T-cell (primary cell): ENCODE measurements at regions of chr3 and their contacts with region 1.

Region 1: DNA sequence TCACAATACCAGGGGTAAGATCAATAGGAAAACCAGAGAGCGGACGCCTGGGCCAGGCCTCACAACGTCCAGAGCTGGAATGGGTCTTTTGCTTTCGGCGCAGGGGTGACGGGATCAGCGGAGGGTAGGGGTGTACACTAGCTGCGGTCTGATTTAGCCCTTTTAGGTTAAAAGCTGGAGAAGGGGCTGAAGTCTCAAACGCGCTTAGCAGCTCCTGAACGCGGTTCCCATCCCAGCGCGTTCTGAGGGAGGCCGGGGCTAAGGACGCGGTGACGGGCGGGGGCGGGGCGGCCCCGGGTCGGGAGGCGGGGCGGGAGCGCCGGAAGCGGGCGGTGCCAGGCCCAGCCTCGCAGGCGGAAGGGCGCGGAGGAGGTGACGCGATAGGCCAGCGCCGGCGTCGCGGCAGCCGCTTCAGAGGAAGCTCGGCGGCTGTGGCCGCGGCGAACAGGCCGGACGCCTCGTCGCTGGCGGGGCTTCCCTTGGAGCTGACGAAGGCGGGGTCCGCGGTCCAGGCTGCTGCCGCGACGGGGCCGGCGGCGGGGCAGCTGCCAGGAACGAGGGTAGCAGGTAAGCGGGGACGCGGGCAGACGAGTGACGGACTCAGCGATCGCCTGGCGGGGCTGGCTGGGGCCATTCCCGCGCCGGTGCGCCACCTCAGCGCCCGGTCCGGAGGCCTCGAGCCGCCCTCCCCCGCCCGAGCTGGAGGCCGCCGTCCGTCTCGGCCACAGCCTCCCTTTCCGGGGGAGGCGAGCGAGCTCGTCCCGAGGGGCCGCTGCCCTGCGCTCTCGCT is at the start of gene SENP5:
- DNase-seq: peak; percentile 77 to 95 (median 87)
- ATAC-seq: peak; percentile 97 to 98 (median 98)
- H3K4me3 ChIP-seq: peak within 1 kb of the TSS; percentile 79 to 92
- H3K4me3 Mint-ChIP-seq: peak within 1 kb of the TSS; percentile 94 to 97 (median 94)
- H3K27ac ChIP-seq: peak within 1 kb of the TSS; percentile 89
- H3K27ac Mint-ChIP-seq: peak within 1 kb of the TSS; percentile 94 to 95
- H3K4me1 ChIP-seq: peaks cover 12 to 26% of the 10 kb centered on the region in 2 experiments
- H3K4me1 Mint-ChIP-seq: peaks cover 28 to 34% (median 33%) of the 10 kb centered on the region in 3 donors
- H3K27me3 ChIP-seq: no peaks in the 10 kb centered on the region
- H3K27me3 Mint-ChIP-seq: no peaks in the 10 kb centered on the region
- total RNA-seq, gene SENP5: 33.8 to 61.2 (median 37.5) TPM

Region 2: DNA sequence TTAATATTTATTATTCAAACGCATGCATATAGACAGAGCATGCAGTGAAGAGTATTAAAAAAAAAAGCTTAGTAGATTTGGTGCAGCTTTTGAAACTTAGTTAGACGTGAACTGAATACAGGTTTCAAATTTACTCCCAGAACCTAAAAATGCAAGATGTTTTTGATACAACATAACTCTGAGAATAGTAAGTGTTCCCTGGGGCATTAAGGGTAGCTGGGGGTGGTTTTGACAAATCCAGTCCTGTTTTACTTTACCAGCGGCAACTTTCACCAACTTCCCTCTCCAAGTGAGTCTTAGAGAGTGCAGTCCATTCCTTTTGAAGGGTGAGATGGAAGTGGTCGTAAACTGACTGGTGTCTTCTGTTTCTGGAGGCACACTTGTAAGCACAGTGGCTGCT is 63.5 kb after region 1 on chr3:
- CTCF ChIA-PET with region 1: no interaction called
- POLR2A ChIA-PET with region 1: interaction called in 1 of 2 experiments, 10 read pairs
- DNase-seq: no peak
- ATAC-seq: no peak
- H3K4me3 ChIP-seq: no peak overlapping the region
- H3K4me3 Mint-ChIP-seq: no peak overlapping the region
- H3K27ac ChIP-seq: no peak overlapping the region
- H3K27ac Mint-ChIP-seq: no peak overlapping the region
- H3K4me1 ChIP-seq: no peaks in the 10 kb centered on the region
- H3K4me1 Mint-ChIP-seq: no peaks in the 10 kb centered on the region
- H3K27me3 ChIP-seq: no peaks in the 10 kb centered on the region
- H3K27me3 Mint-ChIP-seq: no peaks in the 10 kb centered on the region

Region 3: DNA sequence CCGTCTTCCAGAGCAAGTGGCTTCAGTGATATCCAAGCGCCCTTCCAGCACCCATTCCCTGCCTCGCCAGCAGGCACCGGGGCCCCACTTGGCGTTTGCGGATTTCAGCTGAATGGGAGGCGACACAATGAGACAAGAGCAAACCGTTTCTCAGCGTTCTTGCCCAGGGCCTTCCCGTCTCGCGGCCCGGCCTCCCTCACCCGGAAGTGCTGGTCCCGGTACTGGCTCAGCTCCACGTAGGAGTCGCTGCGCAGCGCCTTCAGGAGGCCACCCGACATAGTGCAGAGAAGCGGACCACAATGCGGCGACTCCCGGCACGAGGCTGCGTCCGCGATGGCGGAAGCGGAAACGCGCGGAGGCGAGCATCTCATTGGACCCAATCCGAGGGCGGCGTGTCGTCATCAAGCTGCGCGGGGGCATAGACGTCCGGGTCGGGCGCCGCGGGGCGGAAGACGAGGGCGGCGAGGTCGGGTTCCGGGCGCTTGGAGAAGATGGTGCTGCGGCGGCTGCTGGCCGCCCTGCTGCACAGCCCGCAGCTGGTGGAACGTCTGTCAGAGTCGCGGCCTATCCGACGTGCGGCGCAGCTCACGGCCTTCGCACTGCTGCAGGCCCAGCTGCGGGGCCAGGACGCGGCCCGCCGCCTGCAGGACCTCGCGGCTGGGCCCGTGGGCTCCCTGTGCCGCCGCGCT is 74.7 kb after region 1 on chr3 and contains the start of gene NCBP2:
- CTCF ChIA-PET with region 1: interaction called in 1 of 2 experiments, 22 read pairs
- POLR2A ChIA-PET with region 1: interaction called in 1 of 2 experiments, 7 read pairs
- DNase-seq: peak; percentile 97 to 100 (median 99)
- ATAC-seq: peak; percentile 93 to 95 (median 94)
- H3K4me3 ChIP-seq: peak within 1 kb of the TSS; percentile 80 to 92
- H3K4me3 Mint-ChIP-seq: peak within 1 kb of the TSS; percentile 96 to 100 (median 99)
- H3K27ac ChIP-seq: peak within 1 kb of the TSS; percentile 92
- H3K27ac Mint-ChIP-seq: peak within 1 kb of the TSS; percentile 96 to 97
- H3K4me1 ChIP-seq: peaks cover 8 to 28% of the 10 kb centered on the region in 2 experiments
- H3K4me1 Mint-ChIP-seq: peaks cover 48 to 49% (median 49%) of the 10 kb centered on the region in 3 donors
- H3K27me3 ChIP-seq: no peaks in the 10 kb centered on the region
- H3K27me3 Mint-ChIP-seq: peaks cover 0 to 2% of the 10 kb centered on the region in 2 donors
- total RNA-seq, gene NCBP2: 48.4 to 70.6 (median 59.3) TPM